GM12878 (cell line): ENCODE measurements at regions of chr13 and their contacts with region 1.

Region 1: GRCh38 chr13:46603165-46603603 is 50.2 kb downstream of the LRCH1 start:
- DNase-seq: no peak
- ATAC-seq: no peak
- H3K4me3 ChIP-seq: no peak overlapping the region
- H3K27ac ChIP-seq: no peak overlapping the region
- H3K4me1 ChIP-seq: peaks cover 47% of the 10 kb centered on the region
- H3K27me3 ChIP-seq: no peaks in the 10 kb centered on the region
- CTCF ChIP-seq: peak; percentile 28 to 38 (median 36); a peak in 3 of 6 replicates
- EP300 ChIP-seq: no peak
- POLR2A ChIP-seq: no peak
- RAD21 ChIP-seq: peak; percentile 48

Region 2: DNA sequence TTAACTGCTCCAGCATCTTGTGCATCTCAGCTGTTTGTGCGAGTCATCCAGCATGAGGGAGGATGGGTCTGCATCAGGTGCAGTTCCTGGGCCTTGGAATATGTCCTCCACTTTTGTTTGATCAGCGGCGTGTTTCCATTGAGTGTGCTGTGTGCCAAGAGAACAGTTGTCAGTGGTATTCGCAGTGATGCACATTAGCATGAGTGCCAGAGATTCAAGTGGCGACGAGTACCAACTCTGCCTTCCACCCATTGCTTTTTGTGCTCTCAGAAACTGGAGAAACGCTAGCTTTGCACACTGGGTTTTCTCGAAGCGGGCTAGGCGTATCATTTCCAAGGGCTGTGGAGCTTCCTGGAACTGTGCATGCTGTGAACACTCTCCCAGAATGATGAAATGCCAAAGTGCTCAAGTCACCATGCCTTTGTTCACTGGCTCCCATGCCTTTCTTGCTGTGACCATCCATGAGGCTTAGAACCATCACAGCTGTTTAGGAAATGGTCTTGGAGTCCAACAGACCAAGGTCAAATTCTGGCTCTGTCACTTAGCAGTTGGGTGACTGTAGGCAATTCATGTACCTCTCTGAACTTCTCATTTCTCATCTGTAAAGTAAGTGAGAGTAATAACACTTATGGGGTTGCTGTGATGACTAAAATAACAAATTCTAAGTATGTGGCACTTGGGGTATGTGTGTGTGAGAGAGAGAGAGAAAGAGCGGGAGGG is 31.8 kb before region 1 on chr13:
- CTCF ChIA-PET with region 1: interaction called, 5 read pairs
- POLR2A ChIA-PET with region 1: interaction called, 6 read pairs
- RAD21 ChIA-PET with region 1: interaction called, 97 read pairs
- SMC1A ChIA-PET with region 1: interaction called, 367 read pairs
- in situ Hi-C with region 1: no loop called
- intact Hi-C with region 1: no loop called
- DNase-seq: no peak
- ATAC-seq: peak; percentile 73
- H3K4me3 ChIP-seq: peak overlapping the region; percentile 20; the same call in 1 of the 2 replicates
- H3K27ac ChIP-seq: peak overlapping the region; percentile 78
- H3K4me1 ChIP-seq: peaks cover 53% of the 10 kb centered on the region
- H3K27me3 ChIP-seq: no peaks in the 10 kb centered on the region
- CTCF ChIP-seq: no peak
- EP300 ChIP-seq: no peak
- POLR2A ChIP-seq: no peak
- RAD21 ChIP-seq: no peak

Region 3: DNA sequence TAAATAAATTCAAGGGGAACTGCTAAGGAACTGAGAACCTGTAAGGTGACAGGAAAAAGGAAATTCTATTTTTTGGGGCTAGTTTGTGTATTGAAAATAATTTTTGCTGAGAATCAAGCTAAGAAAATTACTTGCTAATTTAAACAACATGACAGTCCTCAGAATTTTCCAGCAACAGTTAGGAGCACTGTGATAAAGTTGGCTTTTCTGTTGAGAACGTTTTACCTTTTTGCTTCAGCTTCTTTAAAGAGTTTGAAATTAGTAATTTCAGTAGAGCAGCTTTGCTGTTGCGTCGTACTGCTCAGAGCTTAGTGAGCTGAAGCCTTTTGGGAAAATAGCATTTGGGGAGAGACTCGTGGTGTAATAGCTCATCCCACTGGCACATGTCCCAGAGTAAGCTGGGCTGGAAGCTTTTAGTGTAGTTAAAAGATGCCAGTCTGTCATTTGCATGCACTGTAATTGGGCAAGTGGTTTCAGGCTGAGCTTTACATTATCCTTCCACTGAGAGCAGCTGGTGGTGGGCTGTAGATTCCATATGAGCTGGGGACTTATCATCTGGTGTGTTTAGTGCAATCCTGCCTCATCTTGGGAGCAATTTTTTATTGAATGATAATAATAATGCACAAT is 19.6 kb after region 1 on chr13:
- CTCF ChIA-PET with region 1: interaction called, 8 read pairs
- POLR2A ChIA-PET with region 1: interaction called, 20 read pairs
- RAD21 ChIA-PET with region 1: interaction called, 22 read pairs
- SMC1A ChIA-PET with region 1: interaction called, 170 read pairs
- in situ Hi-C with region 1: no loop called
- intact Hi-C with region 1: no loop called
- DNase-seq: no peak
- ATAC-seq: peak; percentile 30
- H3K4me3 ChIP-seq: peak overlapping the region; percentile 1; the same call in 1 of the 2 replicates
- H3K27ac ChIP-seq: peak overlapping the region; percentile 55
- H3K4me1 ChIP-seq: peaks cover 61% of the 10 kb centered on the region
- H3K27me3 ChIP-seq: no peaks in the 10 kb centered on the region
- CTCF ChIP-seq: no peak
- EP300 ChIP-seq: no peak
- POLR2A ChIP-seq: no peak
- RAD21 ChIP-seq: no peak

Region 4: DNA sequence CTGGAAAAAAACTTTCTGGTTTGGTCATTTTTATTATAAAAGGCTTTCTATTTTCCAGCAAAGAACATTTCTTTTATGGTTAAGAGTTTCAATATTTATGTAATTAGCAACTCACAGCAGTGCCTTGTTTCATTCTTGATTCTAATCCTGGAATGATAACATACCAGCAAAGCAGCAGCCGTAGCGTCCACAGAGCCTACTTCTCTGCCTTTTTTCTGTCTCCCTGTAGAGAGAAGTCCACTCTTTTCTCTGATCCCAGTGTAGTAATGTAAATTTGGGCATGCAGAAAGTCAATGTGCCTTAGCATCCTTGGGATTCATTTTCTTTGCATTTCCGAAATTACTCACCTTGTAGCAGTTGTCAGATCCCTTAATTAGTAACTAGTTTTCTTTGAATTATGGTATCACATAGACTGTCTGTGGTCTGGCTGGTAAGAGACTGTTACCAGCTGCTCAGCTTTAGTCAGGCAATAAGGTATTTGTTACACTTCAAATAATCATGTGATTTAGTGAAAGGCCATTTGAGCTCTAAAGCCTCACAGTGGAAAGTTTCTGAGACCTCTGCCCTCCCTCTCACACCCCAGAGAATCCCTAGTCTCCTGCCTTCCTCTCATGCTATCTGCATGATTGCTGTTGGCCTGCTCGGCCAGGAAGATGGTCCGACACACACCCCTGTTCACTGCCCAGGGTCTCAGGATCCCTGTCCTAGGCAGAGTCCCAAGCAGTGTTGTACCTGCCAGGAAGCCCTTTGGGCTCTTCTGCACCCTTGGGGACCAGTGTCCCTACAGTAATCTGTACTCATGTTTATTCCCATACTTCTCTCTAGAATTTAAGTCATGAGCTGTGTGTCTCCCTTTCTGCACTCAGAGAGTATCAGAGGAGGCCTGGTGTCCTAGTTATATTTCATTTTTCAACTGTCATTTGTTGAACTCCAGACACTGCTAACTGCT is 36.1 kb after region 1 on chr13:
- CTCF ChIA-PET with region 1: interaction called, 5 read pairs
- POLR2A ChIA-PET with region 1: interaction called, 3 read pairs
- RAD21 ChIA-PET with region 1: interaction called, 15 read pairs
- SMC1A ChIA-PET with region 1: interaction called, 22 read pairs
- in situ Hi-C with region 1: no loop called
- intact Hi-C with region 1: loop called (anchors 1 kb)
- DNase-seq: peak; percentile 71
- ATAC-seq: peak; percentile 95
- H3K4me3 ChIP-seq: peak overlapping the region; percentile 41
- H3K27ac ChIP-seq: peak overlapping the region; percentile 56
- H3K4me1 ChIP-seq: peaks cover 20% of the 10 kb centered on the region
- H3K27me3 ChIP-seq: no peaks in the 10 kb centered on the region
- CTCF ChIP-seq: no peak
- EP300 ChIP-seq: peak; percentile 93 to 96
- POLR2A ChIP-seq: no peak
- RAD21 ChIP-seq: no peak

Region 5: DNA sequence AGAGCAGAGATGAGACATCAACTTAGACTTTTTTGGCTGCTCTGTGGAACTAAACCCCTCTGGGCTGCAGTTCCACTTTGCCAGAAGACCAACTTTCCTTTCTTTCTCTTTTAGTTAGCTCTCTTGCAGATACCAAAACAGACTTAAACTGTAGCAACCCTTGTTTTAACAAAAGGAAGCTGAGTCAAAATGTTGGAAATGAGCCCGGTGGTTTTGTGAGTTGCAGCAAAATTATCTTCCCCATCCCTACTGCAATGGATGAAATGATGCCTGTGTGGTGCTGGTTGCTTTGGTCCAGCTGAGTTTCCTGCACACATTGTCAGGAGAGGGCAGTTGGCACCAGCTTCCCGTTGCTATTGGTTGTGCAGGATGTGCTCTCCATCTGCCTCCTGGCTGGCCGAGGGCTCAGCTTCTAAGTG is 65.1 kb after region 1 on chr13:
- CTCF ChIA-PET with region 1: interaction called, 10 read pairs
- POLR2A ChIA-PET with region 1: interaction called, 5 read pairs
- RAD21 ChIA-PET with region 1: interaction called, 6 read pairs
- SMC1A ChIA-PET with region 1: interaction called, 95 read pairs
- in situ Hi-C with region 1: no loop called
- intact Hi-C with region 1: loop called (anchors 5 kb)
- DNase-seq: no peak
- ATAC-seq: peak; percentile 11
- H3K4me3 ChIP-seq: peak overlapping the region; percentile 66
- H3K27ac ChIP-seq: peak overlapping the region; percentile 91
- H3K4me1 ChIP-seq: peaks cover 30% of the 10 kb centered on the region
- H3K27me3 ChIP-seq: no peaks in the 10 kb centered on the region
- CTCF ChIP-seq: no peak
- EP300 ChIP-seq: 0 out of 4 replicates have a peak, but pooled peaks of 1 of the 2 experiments have one; percentile 17
- POLR2A ChIP-seq: no peak
- RAD21 ChIP-seq: no peak

Region 6: GRCh38 chr13:48000778-48001628 is 1397.8 kb after region 1 on chr13 and contains the start of gene SUCLA2:
- CTCF ChIA-PET with region 1: no interaction called
- POLR2A ChIA-PET with region 1: no interaction called
- RAD21 ChIA-PET with region 1: no interaction called
- SMC1A ChIA-PET with region 1: no interaction called
- in situ Hi-C with region 1: no loop called
- intact Hi-C with region 1: no loop called
- DNase-seq: peak; percentile 52
- ATAC-seq: peak; percentile 100
- H3K4me3 ChIP-seq: peak within 1 kb of the TSS; percentile 82
- H3K27ac ChIP-seq: peak within 1 kb of the TSS; percentile 54; the same call in 1 of the 2 replicates
- H3K4me1 ChIP-seq: no peaks in the 10 kb centered on the region
- H3K27me3 ChIP-seq: no peaks in the 10 kb centered on the region
- CTCF ChIP-seq: no peak
- EP300 ChIP-seq: no peak
- POLR2A ChIP-seq: peak; percentile 89
- RAD21 ChIP-seq: no peak
- polyA plus RNA-seq, gene SUCLA2: 41.8 to 45.2 TPM